ENCODE measurements at regions of chr19 and their contacts with region 1.

Region 1: GRCh38 chr19:43463381-43464136 is 1.8 kb downstream of the LYPD3 start:
- H3K4me3 ChIP-seq: peak overlapping the region; percentile 64
- H3K27ac ChIP-seq: peak overlapping the region; percentile 48; the same call in 1 of the 2 replicates
- H3K4me1 ChIP-seq: peaks cover 13% of the 10 kb centered on the region; the same call in 1 of the 2 replicates
- CTCF ChIP-seq: no peak

Region 2: DNA sequence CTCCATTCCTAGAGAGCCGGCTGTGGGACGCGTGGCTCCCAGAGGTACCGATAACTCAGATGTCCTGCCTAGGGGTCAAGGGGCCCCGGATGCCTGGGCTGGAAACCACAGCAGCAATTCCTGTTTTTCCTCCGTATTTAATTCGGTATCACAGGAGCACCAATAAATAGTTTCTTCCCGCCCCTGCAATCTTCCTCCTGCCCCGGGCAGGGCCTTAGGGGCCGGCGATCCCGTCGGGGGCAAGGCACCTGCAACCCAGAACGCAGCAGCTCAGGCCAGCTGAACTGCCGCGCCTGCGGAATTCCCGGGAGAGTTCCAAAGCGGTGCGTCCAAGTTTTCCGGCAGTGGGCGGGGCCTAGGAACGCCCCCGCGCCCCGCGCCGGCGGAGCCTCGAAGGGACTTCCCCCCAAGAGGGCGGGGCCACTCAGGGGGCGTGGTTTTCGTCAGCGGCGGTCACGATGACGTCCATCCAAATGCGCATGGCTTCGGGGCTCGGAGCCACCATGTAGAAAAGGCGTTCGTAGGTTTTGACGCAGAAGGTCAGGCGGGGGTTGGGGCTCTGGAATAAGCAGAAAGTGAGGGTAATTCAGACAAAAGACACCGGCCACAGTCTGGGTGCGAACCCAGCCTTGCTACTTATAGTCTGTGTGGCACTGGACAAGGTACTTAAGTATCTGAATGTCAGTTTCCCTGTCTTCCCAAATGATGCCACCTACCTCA is 11.6 kb after region 1 on chr19:
- CTCF ChIA-PET with region 1: interaction called, 3 read pairs
- POLR2A ChIA-PET with region 1: interaction called, 30 read pairs
- H3K4me3 ChIP-seq: peak overlapping the region; percentile 3
- H3K27ac ChIP-seq: 0 out of 2 replicates have a peak overlapping the region, but pooled peaks have one; percentile 45
- H3K4me1 ChIP-seq: peaks cover 7% of the 10 kb centered on the region
- CTCF ChIP-seq: no peak

Region 3: GRCh38 chr19:43503501-43504425 is 40.2 kb after region 1 on chr19:
- CTCF ChIA-PET with region 1: interaction called, 8 read pairs
- POLR2A ChIA-PET with region 1: interaction called, 22 read pairs
- H3K4me3 ChIP-seq: peak overlapping the region; percentile 78
- H3K27ac ChIP-seq: peak overlapping the region; percentile 77
- H3K4me1 ChIP-seq: peaks cover 15% of the 10 kb centered on the region; the same call in 1 of the 2 replicates
- CTCF ChIP-seq: peak; percentile 96

Region 4: DNA sequence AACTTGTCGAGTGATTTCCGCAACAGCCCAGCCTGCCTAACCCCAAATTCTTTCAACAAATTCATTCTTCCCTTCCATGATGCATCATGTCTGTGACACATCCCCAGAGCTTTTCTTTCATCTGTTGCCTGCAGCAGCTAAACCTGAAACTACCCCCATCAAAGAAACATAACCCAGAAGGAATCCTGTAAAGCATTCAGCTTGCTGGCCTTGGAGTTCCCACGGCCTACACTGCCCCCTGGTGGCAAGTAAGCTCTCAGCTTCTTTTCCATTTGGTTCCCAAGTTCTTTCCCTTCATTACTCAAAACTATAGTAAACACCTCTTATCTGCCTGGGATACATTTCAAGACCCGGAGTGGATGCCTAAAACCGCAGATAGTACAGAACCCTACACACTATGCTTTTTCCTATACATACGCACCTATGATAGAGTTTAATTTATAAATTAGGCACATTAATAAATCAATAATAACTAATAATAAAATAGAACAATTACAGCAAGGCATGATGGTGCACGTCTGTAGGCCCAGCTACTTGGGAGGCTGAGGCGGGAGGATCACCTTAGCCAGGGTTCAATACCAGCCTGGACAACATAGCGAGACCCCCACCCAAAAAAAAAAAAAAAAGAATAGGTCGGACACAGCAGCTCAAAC is 56.0 kb after region 1 on chr19:
- CTCF ChIA-PET with region 1: interaction called, 21 read pairs
- POLR2A ChIA-PET with region 1: interaction called, 10 read pairs
- H3K4me3 ChIP-seq: no peak overlapping the region
- H3K27ac ChIP-seq: no peak overlapping the region
- H3K4me1 ChIP-seq: peaks cover 3% of the 10 kb centered on the region; the same call in 1 of the 2 replicates
- CTCF ChIP-seq: peak; percentile 92

Region 5: DNA sequence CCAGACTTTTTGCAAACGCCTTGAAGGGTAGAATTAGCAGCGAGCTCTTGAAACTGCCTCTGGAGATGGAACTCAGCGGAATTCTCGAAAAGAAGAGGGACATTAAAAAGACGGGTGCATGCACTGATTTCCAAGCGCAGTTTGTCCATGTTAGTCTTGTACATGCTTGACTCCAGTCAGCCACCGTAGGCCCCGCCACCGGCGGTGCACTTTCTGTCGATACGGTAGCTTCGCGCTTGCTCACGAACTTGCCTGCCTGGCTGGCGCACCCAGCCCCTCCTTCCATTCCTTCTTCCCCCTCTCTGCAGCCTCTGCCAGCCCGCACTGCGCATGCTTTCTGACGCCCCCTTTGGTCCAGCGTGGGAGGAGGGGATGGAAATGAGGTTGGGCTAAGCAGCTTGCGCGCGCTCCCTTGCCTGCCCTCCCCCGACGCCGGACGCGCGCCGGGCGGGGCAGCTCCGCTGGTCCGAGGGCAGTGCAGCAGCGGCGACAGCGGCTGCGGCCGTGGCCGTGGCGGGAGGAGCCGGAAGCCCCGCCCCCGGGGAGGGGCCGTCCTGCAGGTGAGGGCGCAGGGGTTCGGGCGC is 69.5 kb after region 1 on chr19 and contains the start of gene ZNF575:
- CTCF ChIA-PET with region 1: interaction called, 5 read pairs
- POLR2A ChIA-PET with region 1: interaction called, 10 read pairs
- H3K4me3 ChIP-seq: peak within 1 kb of the TSS; percentile 9
- H3K27ac ChIP-seq: peak within 1 kb of the TSS; percentile 73
- H3K4me1 ChIP-seq: peaks cover 26% of the 10 kb centered on the region
- CTCF ChIP-seq: no peak; the same call in 1 of the 2 replicates

Region 6: GRCh38 chr19:43545981-43546380 is 82.4 kb after region 1 on chr19:
- CTCF ChIA-PET with region 1: no interaction called
- POLR2A ChIA-PET with region 1: no interaction called
- H3K4me3 ChIP-seq: no peak overlapping the region
- H3K27ac ChIP-seq: no peak overlapping the region
- H3K4me1 ChIP-seq: no peaks in the 10 kb centered on the region
- CTCF ChIP-seq: no peak